Astrocyte of the cerebellum (primary cell): ENCODE measurements at regions of chr1 and their contacts with region 1.

Region 1: GRCh38 chr1:160432371-160432786 is 32.0 kb downstream of the VANGL2 start:
- DNase-seq: no peak
- H3K4me3 ChIP-seq: no peak overlapping the region
- CTCF ChIP-seq: no peak

Region 2: GRCh38 chr1:160466961-160467360 is 34.6 kb after region 1 on chr1:
- in situ Hi-C with region 1: loop called (anchors 5 kb)
- DNase-seq: no peak
- H3K4me3 ChIP-seq: no peak overlapping the region
- CTCF ChIP-seq: no peak

Region 3: DNA sequence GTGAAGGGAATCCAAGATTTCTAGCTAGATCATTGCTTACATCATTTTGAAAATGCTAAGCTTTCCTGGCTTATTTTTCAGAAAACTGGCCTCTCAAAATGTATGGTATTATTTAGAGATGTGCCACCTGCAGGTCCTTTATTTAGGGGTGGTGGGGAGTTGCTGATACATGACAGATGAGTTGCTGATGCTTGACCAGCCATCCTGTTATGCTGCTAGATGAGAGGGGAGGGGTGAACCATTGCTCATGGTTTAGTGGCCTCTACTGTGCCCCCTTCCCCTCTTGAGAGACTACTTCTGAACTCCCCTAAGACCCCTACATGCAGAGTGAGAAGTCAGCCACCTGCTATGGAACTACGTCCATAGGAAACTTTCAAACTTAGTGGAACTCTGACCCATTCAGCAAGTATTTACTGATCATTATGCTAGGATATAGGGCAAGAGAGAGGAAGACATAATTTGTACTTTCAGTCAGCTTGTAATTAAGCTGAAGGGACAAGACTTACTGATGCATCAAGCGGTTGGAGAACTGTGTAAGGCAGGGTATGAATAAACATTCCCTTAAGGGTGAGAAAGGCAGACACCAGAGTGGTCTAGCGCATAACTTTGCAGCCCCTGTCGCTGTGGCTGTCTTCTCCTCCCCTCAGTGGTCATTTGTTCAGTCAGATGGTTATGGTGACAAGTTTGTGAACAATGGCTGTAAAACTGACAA is 56.1 kb after region 1 on chr1:
- in situ Hi-C with region 1: no loop called
- DNase-seq: no peak
- H3K4me3 ChIP-seq: no peak overlapping the region
- CTCF ChIP-seq: no peak